Lower leg skin (tissue), 4 donors: ENCODE measurements at regions of chr9 and their contacts with region 1.

Region 1: DNA sequence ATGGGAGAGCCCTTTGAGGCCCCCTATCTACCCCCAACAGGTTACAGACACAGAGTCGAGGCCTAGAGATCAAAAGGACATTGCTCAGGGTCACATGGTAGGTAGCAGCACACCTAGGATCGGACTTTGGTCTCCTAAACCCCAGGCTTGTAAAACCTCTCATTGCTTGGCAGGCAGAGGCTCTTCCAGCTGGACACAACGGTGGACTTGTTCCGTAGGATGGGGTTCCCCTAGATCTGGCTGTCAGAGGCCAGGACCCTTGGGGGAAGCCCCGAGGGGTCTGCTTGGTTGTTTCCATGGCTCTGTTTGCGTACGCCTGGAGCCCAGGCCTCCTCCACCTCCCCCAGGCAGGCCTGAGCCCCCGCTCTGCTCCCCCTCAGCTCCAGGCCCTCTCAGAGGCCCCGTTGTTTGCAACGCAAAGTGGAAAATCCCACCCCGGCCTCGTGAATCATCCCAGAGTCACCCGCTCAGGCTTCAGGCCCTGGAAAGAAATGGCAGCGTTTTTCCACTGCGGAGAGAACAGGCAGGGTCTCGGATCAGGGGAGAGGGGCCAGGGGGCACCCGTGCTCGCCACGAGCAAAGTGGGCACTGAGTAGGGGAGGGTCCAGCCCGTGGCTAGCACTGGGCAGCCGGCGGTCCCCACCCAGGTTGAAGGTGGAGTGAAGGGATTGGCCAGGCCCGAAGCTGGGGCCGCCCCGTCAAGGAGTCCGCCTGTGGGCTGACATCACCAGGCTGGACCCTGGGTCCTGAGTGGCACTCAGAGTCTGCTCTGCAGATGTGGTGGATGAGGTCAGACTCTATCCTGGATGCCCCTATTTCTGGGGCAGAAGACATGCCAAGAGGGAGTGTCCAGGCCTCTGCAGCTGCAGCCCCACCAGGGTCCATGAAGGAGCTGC is 19.8 kb downstream of the COL27A1 start:
- DNase-seq: no peak
- H3K4me3 ChIP-seq: no peak overlapping the region
- CTCF ChIP-seq: no peak
- POLR2A ChIP-seq: no peak

Region 2: GRCh38 chr9:114224247-114224610 is 49.1 kb after region 1 on chr9:
- intact Hi-C with region 1: loop called (anchors 10 kb)
- DNase-seq: no peak
- H3K4me3 ChIP-seq: no peak overlapping the region
- CTCF ChIP-seq: no peak
- POLR2A ChIP-seq: no peak

Region 3: DNA sequence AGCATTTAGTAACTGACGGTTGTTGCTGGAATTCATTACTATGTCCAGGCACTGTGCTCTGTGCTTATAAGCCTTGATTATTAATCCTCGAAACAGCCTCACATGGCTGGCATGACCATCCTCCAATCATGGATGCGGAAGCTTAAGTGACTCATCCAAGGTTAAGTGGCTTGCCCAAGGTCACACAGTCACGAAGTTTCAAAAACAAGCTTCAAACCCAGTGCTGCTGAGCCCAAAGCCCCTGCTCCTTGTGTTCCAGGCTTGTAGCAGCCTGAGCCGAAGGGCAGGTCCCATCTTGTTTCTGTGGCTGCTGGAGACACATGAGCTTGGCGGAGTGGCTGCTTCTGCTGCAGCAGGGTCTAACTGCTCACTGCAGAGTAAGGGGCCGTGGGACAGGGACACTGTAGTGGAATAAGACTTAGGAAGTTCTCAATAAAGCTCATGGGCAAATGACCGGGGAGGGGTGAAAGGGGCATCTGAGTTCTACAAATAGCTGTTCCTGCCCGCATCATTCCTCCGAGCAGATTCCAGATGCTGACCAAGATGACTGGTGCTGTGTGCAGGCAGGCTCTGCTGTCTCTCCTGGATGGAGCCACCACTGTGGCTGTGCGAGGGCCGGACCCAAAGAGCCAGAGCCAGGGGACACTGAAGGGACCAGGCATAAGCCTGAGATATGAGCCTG is 297.8 kb after region 1 on chr9:
- intact Hi-C with region 1: no loop called
- DNase-seq: peak; percentile 23 to 66
- H3K4me3 ChIP-seq: no peak overlapping the region
- CTCF ChIP-seq: no peak
- POLR2A ChIP-seq: no peak